Gastrocnemius medialis (tissue), 4 donors: ENCODE measurements at regions of chr1 and their contacts with region 1.

Region 1: GRCh38 chr1:167105271-167106118 is 11.6 kb downstream of the STYXL2 start:
- DNase-seq: peak; percentile 42 to 65
- ATAC-seq: peak; percentile 91
- H3K4me3 ChIP-seq: peak overlapping the region in 3 of 4 donors; percentile 10 to 31 (median 22)
- H3K27ac ChIP-seq: peak overlapping the region; percentile 85 to 94 (median 89)
- H3K4me1 ChIP-seq: peaks cover 71 to 72% of the 10 kb centered on the region in 2 donors
- H3K27me3 ChIP-seq: no peaks in the 10 kb centered on the region
- CTCF ChIP-seq: no peak
- POLR2A ChIP-seq: peak in 1 of 2 donors; percentile 31

Region 2: GRCh38 chr1:167066333-167067122 is 39.0 kb before region 1 on chr1:
- in situ Hi-C with region 1: no loop called
- intact Hi-C with region 1: no loop called
- DNase-seq: peak; percentile 56 to 68
- ATAC-seq: peak; percentile 85 to 96
- H3K4me3 ChIP-seq: peak overlapping the region; percentile 36 to 70 (median 42)
- H3K27ac ChIP-seq: no peak overlapping the region
- H3K4me1 ChIP-seq: peaks cover 0 to 5% of the 10 kb centered on the region in 2 donors
- H3K27me3 ChIP-seq: no peaks in the 10 kb centered on the region
- CTCF ChIP-seq: peak; percentile 93 to 98 (median 96)
- POLR2A ChIP-seq: no peak

Region 3: GRCh38 chr1:167090314-167090942 is 15.1 kb before region 1 on chr1 and contains the start of gene GPA33:
- in situ Hi-C with region 1: no loop called
- intact Hi-C with region 1: loop called (anchors 1 kb)
- DNase-seq: no peak
- ATAC-seq: no peak
- H3K4me3 ChIP-seq: no peak within 1 kb of the TSS
- H3K27ac ChIP-seq: peak within 1 kb of the TSS; percentile 21 to 48 (median 34)
- H3K4me1 ChIP-seq: peaks cover 31 to 49% of the 10 kb centered on the region in 2 donors
- H3K27me3 ChIP-seq: no peaks in the 10 kb centered on the region
- CTCF ChIP-seq: no peak
- POLR2A ChIP-seq: no peak
- total RNA-seq, gene GPA33: 1.9 TPM in 1 of 4 donors, not detected in the others

Region 4: DNA sequence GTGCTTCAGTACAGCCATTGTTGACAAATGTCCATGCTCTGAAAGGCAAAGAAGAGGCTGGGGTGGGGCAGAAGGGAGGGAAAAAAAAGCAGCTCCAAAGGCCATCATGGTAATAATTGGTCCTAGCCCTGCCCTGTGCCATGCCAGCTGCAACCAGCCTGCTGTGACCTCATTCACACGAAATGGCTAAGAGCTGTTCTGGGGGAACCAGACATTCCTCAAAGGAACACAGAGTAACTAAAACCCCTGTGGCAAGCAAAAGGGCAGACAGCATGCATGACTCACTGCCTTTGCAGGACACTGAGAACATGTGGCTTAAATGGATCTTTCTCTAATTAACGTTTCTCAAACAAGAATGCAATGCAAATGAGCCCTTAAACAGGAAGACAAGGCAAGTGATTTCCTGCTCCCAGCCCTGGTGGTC is 30.7 kb after region 1 on chr1:
- in situ Hi-C with region 1: no loop called
- intact Hi-C with region 1: loop called (anchors 2 kb)
- DNase-seq: peak; percentile 81 to 87
- ATAC-seq: peak; percentile 92 to 96
- H3K4me3 ChIP-seq: no peak overlapping the region
- H3K27ac ChIP-seq: peak overlapping the region; percentile 68 to 88 (median 80)
- H3K4me1 ChIP-seq: peaks cover 21 to 59% of the 10 kb centered on the region in 2 donors
- H3K27me3 ChIP-seq: no peaks in the 10 kb centered on the region
- CTCF ChIP-seq: no peak
- POLR2A ChIP-seq: no peak